ENCODE measurements at regions of chr5 and their contacts with region 1.

Region 1: DNA sequence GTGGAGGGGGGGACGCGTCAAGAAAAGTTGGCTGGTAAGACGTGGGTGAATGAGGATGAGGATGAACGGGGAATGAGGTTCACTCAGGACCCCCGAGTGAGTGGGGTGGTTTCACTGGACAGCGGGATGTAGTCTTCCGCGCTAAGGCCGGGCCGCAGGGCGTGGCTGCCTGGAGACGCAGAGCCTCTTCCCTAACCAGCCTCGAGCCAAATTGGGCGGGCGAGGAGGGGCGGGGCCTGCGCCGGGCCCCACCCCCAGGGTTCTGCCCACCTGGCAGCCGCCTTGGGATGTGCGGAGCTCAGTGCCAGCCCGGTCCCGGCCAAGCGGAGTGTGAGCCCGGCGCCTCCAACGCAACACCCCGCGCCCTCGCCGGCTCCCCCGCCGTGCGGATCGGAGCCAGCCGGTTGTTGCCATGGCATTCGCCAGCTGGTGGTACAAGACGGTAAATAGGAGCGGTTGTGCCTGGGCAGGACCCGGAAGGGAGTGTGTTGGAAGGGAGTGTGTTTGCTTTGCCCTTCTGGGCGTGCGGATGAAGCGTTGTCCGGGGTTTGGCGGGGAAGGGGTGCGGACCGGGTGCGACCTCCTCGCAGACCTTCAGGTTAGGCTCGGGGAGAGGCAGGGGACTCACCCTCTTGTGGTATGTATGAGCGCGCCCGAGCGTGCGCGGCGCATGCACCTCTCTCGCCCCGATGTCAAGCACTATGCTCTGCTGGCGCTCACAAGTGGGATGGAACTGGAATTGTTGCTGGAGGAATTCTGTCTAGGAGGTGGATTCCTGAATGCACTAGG is 743 bp downstream of the CAST start:
- DNase-seq: peak; percentile 86 to 96
- H3K4me3 ChIP-seq: peak overlapping the region; percentile 88
- H3K27ac ChIP-seq: peak overlapping the region; percentile 94
- H3K4me1 ChIP-seq: peaks cover 53% of the 10 kb centered on the region
- H3K27me3 ChIP-seq: no peaks in the 10 kb centered on the region
- CTCF ChIP-seq: no peak

Region 2: DNA sequence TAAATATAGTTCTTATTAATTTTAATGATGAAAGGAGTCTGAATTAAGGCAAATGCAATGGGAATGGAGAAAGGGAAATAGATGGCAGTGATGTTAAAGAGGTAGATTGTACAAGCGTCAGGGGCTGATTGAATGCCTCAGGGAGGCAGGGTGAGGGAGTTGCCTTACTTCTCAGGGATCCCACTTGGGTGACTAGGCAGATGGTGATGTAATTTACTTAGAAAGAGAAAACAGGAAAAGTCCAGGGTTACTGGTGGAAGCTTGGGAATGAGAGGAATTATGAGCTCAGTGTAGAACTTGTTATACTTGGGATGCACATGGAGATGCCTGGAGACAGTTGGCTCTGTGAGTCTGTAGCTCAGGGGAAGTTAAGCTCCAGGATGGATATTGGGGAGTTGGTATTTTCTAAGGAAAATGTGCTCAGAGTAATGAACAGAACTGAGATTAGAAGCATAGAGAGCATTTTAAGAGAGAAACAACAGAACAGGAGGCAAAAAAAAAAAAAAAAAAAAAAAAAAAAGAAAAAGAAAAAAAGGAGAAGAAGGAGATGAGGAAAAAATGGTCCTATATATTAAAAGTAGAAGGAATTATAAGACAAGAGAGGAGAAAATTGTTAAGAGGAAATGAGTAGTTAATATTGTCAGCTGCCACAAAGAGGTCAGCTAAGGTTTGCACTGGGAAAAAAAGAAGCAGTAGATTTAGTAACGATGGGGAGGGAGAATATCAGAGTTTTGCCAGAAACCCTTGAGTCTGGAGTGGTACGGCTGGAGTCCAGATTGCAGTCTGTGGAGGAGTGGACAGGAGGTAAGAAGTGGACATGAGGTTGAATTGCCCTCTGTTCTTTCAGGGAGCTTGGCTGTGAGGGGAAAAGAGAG is 613.3 kb before region 1 on chr5:
- CTCF ChIA-PET with region 1: no interaction called
- POLR2A ChIA-PET with region 1: interaction called, 36 read pairs
- intact Hi-C with region 1: no loop called
- DNase-seq: no peak
- H3K4me3 ChIP-seq: no peak overlapping the region
- H3K27ac ChIP-seq: no peak overlapping the region
- H3K4me1 ChIP-seq: no peaks in the 10 kb centered on the region
- H3K27me3 ChIP-seq: no peaks in the 10 kb centered on the region
- CTCF ChIP-seq: no peak

Region 3: GRCh38 chr5:96293966-96294883 is 368.7 kb before region 1 on chr5:
- CTCF ChIA-PET with region 1: no interaction called
- POLR2A ChIA-PET with region 1: no interaction called
- intact Hi-C with region 1: no loop called
- DNase-seq: no peak
- H3K4me3 ChIP-seq: no peak overlapping the region
- H3K27ac ChIP-seq: no peak overlapping the region
- H3K4me1 ChIP-seq: peaks cover 12% of the 10 kb centered on the region
- H3K27me3 ChIP-seq: no peaks in the 10 kb centered on the region
- CTCF ChIP-seq: no peak

Region 4: GRCh38 chr5:96637181-96637580 is 25.7 kb before region 1 on chr5:
- CTCF ChIA-PET with region 1: no interaction called
- POLR2A ChIA-PET with region 1: interaction called, 16 read pairs
- intact Hi-C with region 1: no loop called
- DNase-seq: peak; percentile 16 to 84
- H3K4me3 ChIP-seq: no peak overlapping the region
- H3K27ac ChIP-seq: peak overlapping the region; percentile 1; the same call in 1 of the 2 replicates
- H3K4me1 ChIP-seq: peaks cover 41% of the 10 kb centered on the region
- H3K27me3 ChIP-seq: no peaks in the 10 kb centered on the region
- CTCF ChIP-seq: no peak

Region 5: DNA sequence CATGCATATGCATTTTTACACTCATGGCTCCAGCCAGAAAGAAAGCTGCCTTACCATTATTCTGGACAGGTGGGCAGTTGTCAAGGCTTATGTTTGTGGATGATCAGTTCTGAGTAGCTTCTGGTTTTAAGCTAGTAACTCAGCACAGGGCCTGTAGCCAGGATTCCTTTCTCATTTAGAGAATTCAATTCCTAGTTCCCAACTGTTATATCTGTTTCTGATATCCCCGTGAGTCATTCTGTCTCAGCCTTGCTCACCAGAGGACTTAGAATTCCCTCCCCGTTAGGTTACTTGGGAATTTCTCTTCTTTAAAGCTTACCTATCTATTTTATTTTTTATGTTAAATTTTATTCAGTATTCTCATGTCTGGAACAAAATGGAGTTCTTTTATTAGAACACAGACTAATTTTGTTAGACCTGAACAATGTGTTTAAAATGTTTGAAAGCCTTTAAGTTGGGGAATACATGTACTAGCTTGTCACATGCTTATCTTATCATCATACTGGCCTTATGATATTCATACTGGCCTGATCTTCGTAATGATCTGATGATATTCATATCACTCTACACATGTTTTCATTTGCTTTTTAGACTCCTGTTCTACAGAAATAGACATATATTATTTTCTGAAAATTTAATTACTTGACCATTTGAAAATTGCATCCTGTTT is 46.4 kb after region 1 on chr5:
- CTCF ChIA-PET with region 1: no interaction called
- POLR2A ChIA-PET with region 1: interaction called, 4 read pairs
- intact Hi-C with region 1: loop called (anchors 2 kb)
- DNase-seq: no peak
- H3K4me3 ChIP-seq: no peak overlapping the region
- H3K27ac ChIP-seq: peak overlapping the region; percentile 57
- H3K4me1 ChIP-seq: peaks cover 57% of the 10 kb centered on the region
- H3K27me3 ChIP-seq: no peaks in the 10 kb centered on the region
- CTCF ChIP-seq: no peak

Region 6: GRCh38 chr5:96734871-96735325 is 72.0 kb after region 1 on chr5:
- CTCF ChIA-PET with region 1: no interaction called
- POLR2A ChIA-PET with region 1: no interaction called
- intact Hi-C with region 1: loop called (anchors 5 kb)
- DNase-seq: no peak
- H3K4me3 ChIP-seq: peak overlapping the region; percentile 14; the same call in 1 of the 2 replicates
- H3K27ac ChIP-seq: peak overlapping the region; percentile 61
- H3K4me1 ChIP-seq: peaks cover 38% of the 10 kb centered on the region
- H3K27me3 ChIP-seq: no peaks in the 10 kb centered on the region
- CTCF ChIP-seq: no peak

Region 7: DNA sequence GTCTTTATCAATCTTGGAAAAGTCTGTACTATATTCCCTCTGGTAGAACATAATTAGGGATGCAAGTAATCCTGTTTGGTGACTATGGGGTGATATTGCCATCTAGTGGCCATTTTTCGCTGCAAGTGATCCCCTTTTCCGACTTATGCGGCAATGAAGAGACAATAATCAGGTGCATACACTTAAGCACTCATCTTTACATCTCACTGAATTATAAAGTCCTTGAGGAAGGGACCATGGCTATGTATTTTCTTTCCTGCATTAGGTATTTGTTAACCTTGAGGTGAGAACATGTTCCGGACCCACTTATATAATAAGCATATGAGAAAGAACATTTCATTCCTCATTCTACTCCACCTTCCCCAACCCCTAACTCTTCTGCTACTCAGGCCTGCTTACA is 499.1 kb after region 1 on chr5:
- CTCF ChIA-PET with region 1: no interaction called
- POLR2A ChIA-PET with region 1: no interaction called
- intact Hi-C with region 1: loop called (anchors 10 kb)
- DNase-seq: peak; percentile 53 to 60
- H3K4me3 ChIP-seq: no peak overlapping the region
- H3K27ac ChIP-seq: no peak overlapping the region
- H3K4me1 ChIP-seq: no peaks in the 10 kb centered on the region
- H3K27me3 ChIP-seq: no peaks in the 10 kb centered on the region
- CTCF ChIP-seq: peak; percentile 89

Measured in PC-9 (cell line).